CD8-positive, alpha-beta T cell (primary cell): ENCODE measurements at regions of chr10 and their contacts with region 1.

Region 1: DNA sequence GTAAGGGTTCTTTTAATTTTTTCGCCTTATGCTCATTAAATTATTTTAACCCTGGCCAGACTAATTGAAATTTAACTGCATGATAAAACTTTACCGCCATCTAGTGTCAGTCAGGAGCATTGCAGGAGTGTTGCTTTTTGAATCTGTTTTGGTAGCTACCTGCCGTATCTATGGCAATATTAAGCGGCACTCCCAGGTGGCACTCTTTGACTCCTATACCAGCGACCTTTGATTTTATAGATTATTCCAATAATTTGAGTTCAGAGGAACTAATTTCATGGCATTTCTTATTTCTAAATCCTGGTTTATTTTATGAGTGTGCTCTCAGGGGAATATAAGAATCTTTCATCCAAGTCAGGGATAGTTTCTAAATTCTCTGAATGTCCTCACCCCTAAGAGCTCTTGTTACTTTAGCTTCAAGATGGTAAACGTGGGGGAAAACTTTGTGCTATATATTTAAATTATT is 198.9 kb downstream of the REEP3 start:
- DNase-seq: peak; percentile 4 to 73 (median 46)
- ATAC-seq: peak; percentile 87
- H3K4me3 ChIP-seq: no peak overlapping the region
- H3K4me3 Mint-ChIP-seq: no peak overlapping the region
- H3K27ac ChIP-seq: no peak overlapping the region
- H3K27ac Mint-ChIP-seq: no peak overlapping the region
- H3K4me1 ChIP-seq: no peaks in the 10 kb centered on the region
- H3K4me1 Mint-ChIP-seq: peaks cover 4% of the 10 kb centered on the region
- H3K27me3 ChIP-seq: peaks cover 0 to 6% of the 10 kb centered on the region in 2 experiments
- H3K27me3 Mint-ChIP-seq: peaks cover 15% of the 10 kb centered on the region
- CTCF ChIP-seq: peak; percentile 100

Region 2: DNA sequence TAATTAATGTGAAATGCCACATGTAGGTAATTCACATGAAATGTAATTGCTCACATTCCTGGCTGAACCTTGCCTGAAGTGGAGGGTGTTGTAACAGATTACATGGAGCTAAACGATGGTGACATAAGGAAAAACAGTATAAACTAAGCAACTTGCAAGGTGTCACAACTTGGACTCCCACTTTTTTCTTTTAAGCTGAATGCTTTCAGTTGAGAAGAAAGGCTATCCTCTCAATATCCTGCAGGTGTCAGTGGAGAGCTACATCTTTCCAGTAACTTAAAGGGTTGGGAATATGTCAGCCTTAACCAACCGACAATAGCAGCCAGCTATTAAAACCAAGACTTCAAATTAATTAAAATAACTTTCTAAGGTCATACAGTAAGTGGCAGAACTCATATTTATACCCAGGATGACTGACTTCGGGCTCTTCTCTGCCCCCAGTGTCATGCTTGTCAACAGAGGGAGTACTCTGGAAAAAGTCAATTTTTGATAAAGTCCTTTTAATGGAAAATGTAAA is 553.3 kb before region 1 on chr10:
- CTCF ChIA-PET with region 1: interaction called, 268 read pairs
- POLR2A ChIA-PET with region 1: interaction called, 7 read pairs
- intact Hi-C with region 1: loop called (anchors 1 kb)
- DNase-seq: peak in 3 of 9 experiments; percentile 17 to 79 (median 71)
- ATAC-seq: peak; percentile 75
- H3K4me3 ChIP-seq: no peak overlapping the region
- H3K4me3 Mint-ChIP-seq: no peak overlapping the region
- H3K27ac ChIP-seq: no peak overlapping the region
- H3K27ac Mint-ChIP-seq: no peak overlapping the region
- H3K4me1 ChIP-seq: no peaks in the 10 kb centered on the region
- H3K4me1 Mint-ChIP-seq: peaks cover 2% of the 10 kb centered on the region
- H3K27me3 ChIP-seq: no peaks in the 10 kb centered on the region
- H3K27me3 Mint-ChIP-seq: no peaks in the 10 kb centered on the region
- CTCF ChIP-seq: peak; percentile 83

Region 3: GRCh38 chr10:63217120-63217605 is 502.9 kb before region 1 on chr10:
- CTCF ChIA-PET with region 1: interaction called, 26 read pairs
- POLR2A ChIA-PET with region 1: interaction called, 4 read pairs
- intact Hi-C with region 1: loop called (anchors 1 to 2 kb)
- DNase-seq: peak in 3 of 9 experiments; percentile 20 to 77 (median 62)
- ATAC-seq: peak; percentile 86
- H3K4me3 ChIP-seq: no peak overlapping the region
- H3K4me3 Mint-ChIP-seq: no peak overlapping the region
- H3K27ac ChIP-seq: no peak overlapping the region
- H3K27ac Mint-ChIP-seq: no peak overlapping the region
- H3K4me1 ChIP-seq: peaks cover 9% of the 10 kb centered on the region
- H3K4me1 Mint-ChIP-seq: peaks cover 52% of the 10 kb centered on the region
- H3K27me3 ChIP-seq: no peaks in the 10 kb centered on the region
- H3K27me3 Mint-ChIP-seq: no peaks in the 10 kb centered on the region
- CTCF ChIP-seq: peak; percentile 93

Region 4: GRCh38 chr10:63707254-63707910 is 12.7 kb before region 1 on chr10:
- CTCF ChIA-PET with region 1: interaction called, 23 read pairs
- POLR2A ChIA-PET with region 1: no interaction called
- intact Hi-C with region 1: no loop called
- DNase-seq: peak in 1 of 9 experiments; percentile 32
- ATAC-seq: peak; percentile 48
- H3K4me3 ChIP-seq: no peak overlapping the region
- H3K4me3 Mint-ChIP-seq: no peak overlapping the region
- H3K27ac ChIP-seq: no peak overlapping the region
- H3K27ac Mint-ChIP-seq: no peak overlapping the region
- H3K4me1 ChIP-seq: no peaks in the 10 kb centered on the region
- H3K4me1 Mint-ChIP-seq: no peaks in the 10 kb centered on the region
- H3K27me3 ChIP-seq: no peaks in the 10 kb centered on the region
- H3K27me3 Mint-ChIP-seq: no peaks in the 10 kb centered on the region
- CTCF ChIP-seq: no peak